ENCODE measurements at regions of chr5 and their contacts with region 1.

Region 1: GRCh38 chr5:60287174-60287771 is 393.7 kb upstream of the PDE4D start:
- DNase-seq: peak; percentile 64
- H3K4me3 Mint-ChIP-seq: no peak overlapping the region
- H3K27ac Mint-ChIP-seq: no peak overlapping the region
- H3K4me1 Mint-ChIP-seq: no peaks in the 10 kb centered on the region
- H3K27me3 Mint-ChIP-seq: peaks cover 30% of the 10 kb centered on the region
- CTCF ChIP-seq: peak; percentile 70

Region 2: DNA sequence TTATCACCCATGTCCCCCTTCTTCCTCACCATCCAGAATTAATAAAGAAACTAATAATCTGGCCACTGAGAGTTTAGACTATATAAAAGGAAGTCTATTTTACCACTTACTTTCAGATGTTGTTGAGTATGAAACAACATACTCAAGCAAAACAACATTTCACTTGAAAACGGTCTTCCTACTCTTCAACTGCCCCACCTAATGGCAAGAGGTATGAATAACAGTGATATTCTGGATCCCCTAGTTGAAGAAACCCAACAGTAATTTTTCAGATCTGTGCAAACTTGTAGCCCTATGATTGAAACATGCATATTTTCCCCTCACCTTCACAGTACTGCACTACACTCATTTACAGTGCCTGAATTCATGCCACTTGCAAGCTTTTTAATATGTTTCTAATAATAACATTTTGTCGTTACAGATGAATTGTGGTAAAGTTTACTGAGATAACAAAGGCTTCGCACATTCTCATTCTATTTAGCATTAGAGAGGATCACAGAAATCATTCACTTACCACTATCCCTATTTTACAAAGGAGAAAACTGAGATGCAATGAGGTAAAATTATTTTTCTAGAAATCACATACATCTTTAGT is 125.8 kb before region 1 on chr5:
- CTCF ChIA-PET with region 1: no interaction called
- intact Hi-C with region 1: loop called (anchors 5 kb)
- DNase-seq: peak; percentile 25
- H3K4me3 Mint-ChIP-seq: no peak overlapping the region
- H3K27ac Mint-ChIP-seq: no peak overlapping the region
- H3K4me1 Mint-ChIP-seq: no peaks in the 10 kb centered on the region
- H3K27me3 Mint-ChIP-seq: no peaks in the 10 kb centered on the region
- CTCF ChIP-seq: peak; percentile 40

Measured in Calu3 (cell line).